B cell (primary cell): ENCODE measurements at regions of chr9 and their contacts with region 1.

Region 1: DNA sequence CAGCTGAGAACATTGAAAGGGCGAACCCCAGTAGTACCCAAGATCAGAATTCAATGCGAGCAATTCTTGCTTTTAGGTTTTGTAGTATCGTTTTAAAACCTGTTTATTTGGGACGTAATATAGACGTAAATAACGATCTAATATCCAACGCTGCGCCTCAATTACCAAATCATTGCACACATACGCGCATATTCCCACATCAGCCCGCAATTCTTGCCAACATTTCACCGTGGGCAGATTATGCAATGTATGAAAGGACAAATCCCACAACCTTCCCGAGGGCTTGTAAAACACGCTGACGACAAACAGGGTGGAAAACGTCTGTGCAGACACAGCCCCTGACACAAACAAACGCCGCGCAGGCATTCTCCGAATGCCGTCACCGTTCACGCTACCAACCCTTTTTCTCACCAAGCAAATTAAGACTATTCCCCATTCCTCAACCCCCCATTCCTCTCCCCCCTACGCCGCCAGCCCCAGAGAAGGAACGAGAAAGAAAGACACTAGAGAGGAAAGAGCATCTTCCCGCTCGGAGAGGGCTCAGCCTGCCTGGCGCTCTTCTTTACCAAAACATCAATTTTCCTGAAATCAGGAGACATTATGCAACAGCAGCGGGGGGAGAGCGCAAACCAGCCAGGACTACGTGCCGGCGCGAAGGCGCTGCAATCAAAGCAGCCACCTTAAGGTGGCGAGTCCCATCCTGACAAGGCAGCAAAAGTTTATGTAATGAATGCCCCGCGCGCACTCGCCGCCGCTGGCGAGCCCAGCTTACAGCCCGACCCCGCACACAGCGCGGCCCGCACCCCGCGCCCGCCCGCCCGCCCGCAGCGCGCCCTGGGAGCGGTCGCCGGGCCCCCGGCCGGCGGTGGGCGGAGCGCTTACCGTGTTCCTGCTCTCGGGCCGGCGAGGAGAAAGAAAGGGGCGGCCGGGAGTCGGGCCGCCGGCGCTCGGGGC is 597 bp downstream of the NFIL3 start:
- DNase-seq: peak; percentile 82
- ATAC-seq: peak; percentile 47
- H3K4me3 ChIP-seq: peak overlapping the region; percentile 46 to 91 (median 70)
- H3K4me3 Mint-ChIP-seq: peak overlapping the region; percentile 95
- H3K27ac ChIP-seq: no peak overlapping the region
- H3K27ac Mint-ChIP-seq: peak overlapping the region; percentile 77
- H3K4me1 ChIP-seq: peaks cover 39 to 50% of the 10 kb centered on the region in 2 donors
- H3K4me1 Mint-ChIP-seq: peaks cover 41% of the 10 kb centered on the region
- H3K27me3 ChIP-seq: peaks cover 0 to 46% (median 33%) of the 10 kb centered on the region in 4 experiments
- H3K27me3 Mint-ChIP-seq: peaks cover 50% of the 10 kb centered on the region
- CTCF ChIP-seq: peak; percentile 35

Region 2: GRCh38 chr9:90914868-90915483 is 508.1 kb before region 1 on chr9:
- CTCF ChIA-PET with region 1: interaction called, 291 read pairs
- POLR2A ChIA-PET with region 1: interaction called, 7 read pairs
- intact Hi-C with region 1: loop called (anchors 1 kb)
- DNase-seq: peak; percentile 85
- ATAC-seq: peak; percentile 97
- H3K4me3 ChIP-seq: no peak overlapping the region
- H3K4me3 Mint-ChIP-seq: no peak overlapping the region
- H3K27ac ChIP-seq: no peak overlapping the region
- H3K27ac Mint-ChIP-seq: no peak overlapping the region
- H3K4me1 ChIP-seq: peaks cover 16 to 22% of the 10 kb centered on the region in 2 donors
- H3K4me1 Mint-ChIP-seq: peaks cover 24% of the 10 kb centered on the region
- H3K27me3 ChIP-seq: no peaks in the 10 kb centered on the region
- H3K27me3 Mint-ChIP-seq: no peaks in the 10 kb centered on the region
- CTCF ChIP-seq: peak; percentile 91

Region 3: GRCh38 chr9:91036826-91037510 is 386.1 kb before region 1 on chr9:
- CTCF ChIA-PET with region 1: interaction called, 80 read pairs
- POLR2A ChIA-PET with region 1: interaction called, 6 read pairs
- intact Hi-C with region 1: loop called (anchors 1 kb)
- DNase-seq: peak; percentile 42
- ATAC-seq: peak; percentile 43
- H3K4me3 ChIP-seq: no peak overlapping the region
- H3K4me3 Mint-ChIP-seq: peak overlapping the region; percentile 44
- H3K27ac ChIP-seq: no peak overlapping the region
- H3K27ac Mint-ChIP-seq: no peak overlapping the region
- H3K4me1 ChIP-seq: peaks cover 16 to 34% of the 10 kb centered on the region in 2 donors
- H3K4me1 Mint-ChIP-seq: peaks cover 32% of the 10 kb centered on the region
- H3K27me3 ChIP-seq: peaks cover 0 to 16% (median 2%) of the 10 kb centered on the region in 4 experiments
- H3K27me3 Mint-ChIP-seq: peaks cover 9% of the 10 kb centered on the region
- CTCF ChIP-seq: peak; percentile 15

Region 4: DNA sequence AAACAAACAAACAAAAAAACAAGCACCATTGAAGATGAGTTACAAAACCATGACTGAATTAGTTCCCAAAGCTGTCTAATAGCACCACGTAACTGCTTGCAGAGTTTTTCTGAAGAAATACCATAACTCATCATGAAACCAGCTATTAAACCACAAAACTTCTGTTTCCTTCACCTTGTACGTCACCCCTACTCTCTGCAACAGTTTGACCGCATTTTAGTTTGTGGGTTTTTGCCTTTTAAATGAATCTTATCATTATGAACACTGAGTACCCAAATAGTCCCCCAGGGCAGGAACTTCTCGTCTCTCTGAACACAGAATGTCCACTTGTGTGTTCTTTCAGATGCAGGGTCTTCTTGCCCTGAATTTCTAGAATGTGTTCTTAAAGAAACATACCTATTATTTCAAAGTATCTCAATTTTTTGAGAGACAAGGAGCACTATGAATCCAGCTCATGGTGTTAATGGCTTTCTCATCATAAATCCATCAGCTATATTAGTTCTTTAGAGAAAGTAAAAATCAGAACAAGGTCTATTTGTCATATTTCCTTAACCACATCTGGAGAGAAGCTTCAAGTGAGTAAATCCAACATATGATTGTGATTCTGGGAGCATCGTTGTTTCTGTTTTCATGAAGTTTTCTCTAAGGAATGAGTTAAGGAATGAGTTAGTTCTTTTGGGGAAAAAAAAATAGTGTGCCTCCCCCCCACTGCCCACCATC is 271.9 kb before region 1 on chr9:
- CTCF ChIA-PET with region 1: interaction called, 4 read pairs
- POLR2A ChIA-PET with region 1: no interaction called
- intact Hi-C with region 1: loop called (anchors 5 kb)
- DNase-seq: peak; percentile 81
- ATAC-seq: peak; percentile 77
- H3K4me3 ChIP-seq: no peak overlapping the region
- H3K4me3 Mint-ChIP-seq: peak overlapping the region; percentile 44
- H3K27ac ChIP-seq: no peak overlapping the region
- H3K27ac Mint-ChIP-seq: peak overlapping the region; percentile 61
- H3K4me1 ChIP-seq: peaks cover 23 to 49% of the 10 kb centered on the region in 2 donors
- H3K4me1 Mint-ChIP-seq: peaks cover 45% of the 10 kb centered on the region
- H3K27me3 ChIP-seq: no peaks in the 10 kb centered on the region
- H3K27me3 Mint-ChIP-seq: peaks cover 5% of the 10 kb centered on the region
- CTCF ChIP-seq: no peak

Region 5: DNA sequence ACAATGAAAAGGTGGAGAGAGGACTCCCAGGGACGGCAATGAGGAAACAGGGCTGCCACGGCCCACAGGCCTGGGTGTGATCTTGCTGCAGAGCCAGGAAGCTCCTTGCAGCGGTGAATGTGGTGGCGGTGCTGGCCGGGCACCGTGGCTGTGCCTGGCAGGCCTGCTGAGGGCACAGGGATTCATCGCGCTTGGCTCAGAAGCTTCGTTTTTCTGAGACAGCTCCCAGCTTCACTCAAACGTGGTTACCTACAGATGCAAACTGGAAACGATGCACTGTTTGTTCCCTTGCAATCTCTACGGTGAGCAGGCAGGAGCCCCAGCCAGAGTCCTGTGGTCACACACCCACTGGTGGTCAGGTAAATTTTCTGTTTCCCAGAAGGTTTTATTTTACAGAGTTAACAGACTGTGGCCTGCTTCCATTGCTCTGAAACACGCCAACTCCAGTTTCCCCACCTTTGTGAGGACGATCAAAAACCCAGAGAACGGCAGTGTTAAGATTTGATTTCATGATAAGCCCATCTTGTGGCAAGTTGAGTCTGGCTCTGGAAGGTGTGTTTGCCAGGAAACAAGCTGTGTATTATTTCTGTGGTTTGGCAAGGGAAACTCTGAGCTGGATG is 245.3 kb before region 1 on chr9:
- CTCF ChIA-PET with region 1: no interaction called
- POLR2A ChIA-PET with region 1: no interaction called
- intact Hi-C with region 1: no loop called
- DNase-seq: peak; percentile 31
- ATAC-seq: no peak
- H3K4me3 ChIP-seq: no peak overlapping the region
- H3K4me3 Mint-ChIP-seq: peak overlapping the region; percentile 26
- H3K27ac ChIP-seq: no peak overlapping the region
- H3K27ac Mint-ChIP-seq: no peak overlapping the region
- H3K4me1 ChIP-seq: peaks cover 29 to 35% of the 10 kb centered on the region in 2 donors
- H3K4me1 Mint-ChIP-seq: peaks cover 33% of the 10 kb centered on the region
- H3K27me3 ChIP-seq: no peaks in the 10 kb centered on the region
- H3K27me3 Mint-ChIP-seq: no peaks in the 10 kb centered on the region
- CTCF ChIP-seq: no peak

Region 6: GRCh38 chr9:91207729-91208418 is 215.2 kb before region 1 on chr9:
- CTCF ChIA-PET with region 1: interaction called, 5 read pairs
- POLR2A ChIA-PET with region 1: no interaction called
- intact Hi-C with region 1: loop called (anchors 5 kb)
- DNase-seq: peak; percentile 63
- ATAC-seq: peak; percentile 91
- H3K4me3 ChIP-seq: peak overlapping the region in 4 of 5 experiments; percentile 3 to 52 (median 10)
- H3K4me3 Mint-ChIP-seq: peak overlapping the region; percentile 86
- H3K27ac ChIP-seq: peak overlapping the region; percentile 73 to 80
- H3K27ac Mint-ChIP-seq: peak overlapping the region; percentile 93
- H3K4me1 ChIP-seq: peaks cover 23 to 27% of the 10 kb centered on the region in 2 donors
- H3K4me1 Mint-ChIP-seq: peaks cover 33% of the 10 kb centered on the region
- H3K27me3 ChIP-seq: no peaks in the 10 kb centered on the region
- H3K27me3 Mint-ChIP-seq: no peaks in the 10 kb centered on the region
- CTCF ChIP-seq: no peak

Region 7: DNA sequence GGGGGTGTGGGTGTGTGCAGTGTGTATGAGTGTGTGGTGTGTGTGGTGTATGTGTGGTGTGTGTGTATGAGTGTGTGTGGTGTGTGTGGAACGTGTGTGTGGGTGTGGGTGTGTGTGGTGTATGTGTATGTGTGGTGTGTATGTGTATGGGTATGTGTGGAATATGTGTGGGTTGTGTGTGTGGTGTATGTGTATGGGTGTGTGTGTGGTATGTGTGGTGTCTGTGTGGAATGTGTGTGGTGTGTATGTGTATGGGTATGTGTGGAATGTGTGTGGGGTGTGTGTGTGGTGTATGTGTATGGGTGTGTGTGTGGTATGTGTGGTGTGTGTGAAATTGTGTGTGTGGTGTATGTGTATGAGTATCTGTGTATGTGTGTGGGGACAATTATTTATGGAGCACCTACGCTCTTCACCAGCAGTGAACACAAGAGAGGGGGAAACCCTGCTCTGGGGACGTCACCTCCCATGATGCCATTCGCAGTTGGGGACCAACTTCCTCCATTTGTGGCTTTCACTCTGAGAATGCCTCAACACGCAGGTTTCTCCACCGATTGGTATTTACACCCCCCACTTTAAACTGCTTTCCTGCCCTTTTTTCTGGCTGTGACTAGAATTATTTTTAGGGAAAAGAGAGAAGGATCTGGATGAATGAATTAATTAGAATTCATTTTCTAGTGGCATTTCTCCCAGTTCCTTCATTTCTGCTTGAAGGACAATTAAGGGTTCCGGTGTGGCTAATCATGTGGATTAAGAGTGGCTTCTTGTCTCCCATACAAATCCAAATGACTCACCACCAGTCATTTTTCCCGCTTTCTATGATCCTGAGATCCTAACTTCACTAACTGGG is 288.9 kb after region 1 on chr9:
- CTCF ChIA-PET with region 1: no interaction called
- POLR2A ChIA-PET with region 1: no interaction called
- intact Hi-C with region 1: loop called (anchors 5 kb)
- DNase-seq: peak; percentile 90
- ATAC-seq: peak; percentile 92
- H3K4me3 ChIP-seq: peak overlapping the region in 3 of 5 experiments; percentile 18 to 68 (median 47)
- H3K4me3 Mint-ChIP-seq: no peak overlapping the region
- H3K27ac ChIP-seq: peak overlapping the region; percentile 35 to 86
- H3K27ac Mint-ChIP-seq: no peak overlapping the region
- H3K4me1 ChIP-seq: peaks cover 15 to 32% of the 10 kb centered on the region in 2 donors
- H3K4me1 Mint-ChIP-seq: peaks cover 6% of the 10 kb centered on the region
- H3K27me3 ChIP-seq: peaks cover 0 to 4% (median 0%) of the 10 kb centered on the region in 4 experiments
- H3K27me3 Mint-ChIP-seq: no peaks in the 10 kb centered on the region
- CTCF ChIP-seq: no peak